A673 (cell line): ENCODE measurements at regions of chr19 and their contacts with region 1.

Region 1: DNA sequence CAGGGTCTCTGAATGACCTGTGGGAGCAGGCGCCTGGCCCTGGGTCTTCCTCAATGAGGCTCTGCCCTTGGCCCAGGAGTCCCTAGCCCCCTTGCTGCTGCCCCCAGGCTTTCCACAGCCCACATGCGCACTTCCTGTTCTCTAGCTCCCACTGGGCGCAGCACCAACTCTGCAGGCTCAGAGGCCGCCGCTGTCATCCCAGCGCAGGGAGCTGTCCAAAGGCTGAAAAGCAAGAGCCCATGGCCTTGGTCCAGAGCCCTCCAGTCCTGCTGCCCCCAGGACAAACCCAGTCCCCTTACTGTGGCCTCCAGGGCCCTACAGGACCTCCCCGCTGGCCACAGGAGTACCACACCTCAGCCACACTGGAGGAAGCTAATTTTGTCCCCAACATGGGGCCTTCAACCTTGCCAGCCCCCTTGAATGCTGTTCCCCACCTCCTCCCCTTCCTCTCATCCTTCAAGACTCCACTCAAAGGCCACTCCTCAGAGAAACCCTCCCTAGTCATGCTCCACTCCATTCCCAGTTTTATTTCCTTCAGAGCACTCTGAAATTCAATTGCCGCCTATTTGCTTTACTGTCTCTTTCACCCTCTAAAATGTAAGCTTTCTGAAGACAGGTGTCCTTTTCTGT is 8.0 kb upstream of the POU2F2 start:
- DNase-seq: peak; percentile 56
- H3K4me3 ChIP-seq: no peak overlapping the region
- H3K27ac ChIP-seq: no peak overlapping the region
- H3K4me1 ChIP-seq: no peaks in the 10 kb centered on the region
- H3K27me3 ChIP-seq: peaks cover 11% of the 10 kb centered on the region
- CTCF ChIP-seq: no peak

Region 2: DNA sequence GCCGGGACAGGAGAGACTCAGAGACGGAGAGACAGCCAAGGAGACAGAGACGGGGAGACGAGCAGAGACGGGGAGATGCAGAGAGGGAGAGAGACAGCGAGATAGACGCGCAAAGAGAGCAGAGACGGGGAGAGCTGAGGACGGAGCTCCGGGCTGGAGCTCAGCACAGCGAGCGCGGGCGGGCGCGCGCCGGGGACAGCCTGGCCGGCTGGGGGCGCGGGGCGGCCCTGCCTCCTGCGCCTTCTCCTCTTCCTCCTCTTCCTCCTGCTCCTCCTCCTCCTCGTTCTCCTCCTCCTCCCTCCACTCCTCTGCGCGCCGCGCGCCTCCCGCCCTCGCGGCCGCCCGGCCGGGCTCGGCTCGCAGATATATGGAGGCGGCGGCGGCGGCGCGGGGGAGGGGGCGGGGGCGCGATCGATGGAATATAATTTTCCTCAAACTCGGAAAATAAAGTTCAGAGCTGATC is 212.0 kb before region 1 on chr19 and contains the start of gene ERFL:
- CTCF ChIA-PET with region 1: no interaction called
- POLR2A ChIA-PET with region 1: no interaction called
- intact Hi-C with region 1: no loop called
- DNase-seq: no peak
- H3K4me3 ChIP-seq: peak within 1 kb of the TSS; percentile 63
- H3K27ac ChIP-seq: peak within 1 kb of the TSS; percentile 28
- H3K4me1 ChIP-seq: peaks cover 41% of the 10 kb centered on the region
- H3K27me3 ChIP-seq: no peaks in the 10 kb centered on the region
- CTCF ChIP-seq: no peak
- total RNA-seq, gene ERFL: 0.95 and 1.2 TPM in 2 replicates

Region 3: GRCh38 chr19:42069619-42070351 is 70.5 kb before region 1 on chr19 and contains the start of gene GRIK5:
- CTCF ChIA-PET with region 1: interaction called, 17 read pairs
- POLR2A ChIA-PET with region 1: no interaction called
- intact Hi-C with region 1: no loop called
- DNase-seq: peak; percentile 59
- H3K4me3 ChIP-seq: peak within 1 kb of the TSS; percentile 55
- H3K27ac ChIP-seq: peak within 1 kb of the TSS; percentile 75
- H3K4me1 ChIP-seq: peaks cover 17% of the 10 kb centered on the region
- H3K27me3 ChIP-seq: no peaks in the 10 kb centered on the region
- CTCF ChIP-seq: no peak
- total RNA-seq, gene GRIK5: 21.2 and 24.0 TPM in 2 replicates

Region 4: GRCh38 chr19:42440357-42441048 is 300.3 kb after region 1 on chr19:
- CTCF ChIA-PET with region 1: no interaction called
- POLR2A ChIA-PET with region 1: no interaction called
- intact Hi-C with region 1: no loop called
- DNase-seq: peak; percentile 87
- H3K4me3 ChIP-seq: no peak overlapping the region
- H3K27ac ChIP-seq: no peak overlapping the region
- H3K4me1 ChIP-seq: no peaks in the 10 kb centered on the region
- H3K27me3 ChIP-seq: no peaks in the 10 kb centered on the region
- CTCF ChIP-seq: peak; percentile 98

Region 5: GRCh38 chr19:43316592-43317319 is 1176.5 kb after region 1 on chr19:
- CTCF ChIA-PET with region 1: no interaction called
- POLR2A ChIA-PET with region 1: no interaction called
- intact Hi-C with region 1: no loop called
- DNase-seq: no peak
- H3K4me3 ChIP-seq: no peak overlapping the region
- H3K27ac ChIP-seq: no peak overlapping the region
- H3K4me1 ChIP-seq: no peaks in the 10 kb centered on the region
- H3K27me3 ChIP-seq: peaks cover 36% of the 10 kb centered on the region
- CTCF ChIP-seq: peak; percentile 32; the same call in 1 of the 2 replicates